ENCODE measurements at regions of chr11 and their contacts with region 1.

Region 1: DNA sequence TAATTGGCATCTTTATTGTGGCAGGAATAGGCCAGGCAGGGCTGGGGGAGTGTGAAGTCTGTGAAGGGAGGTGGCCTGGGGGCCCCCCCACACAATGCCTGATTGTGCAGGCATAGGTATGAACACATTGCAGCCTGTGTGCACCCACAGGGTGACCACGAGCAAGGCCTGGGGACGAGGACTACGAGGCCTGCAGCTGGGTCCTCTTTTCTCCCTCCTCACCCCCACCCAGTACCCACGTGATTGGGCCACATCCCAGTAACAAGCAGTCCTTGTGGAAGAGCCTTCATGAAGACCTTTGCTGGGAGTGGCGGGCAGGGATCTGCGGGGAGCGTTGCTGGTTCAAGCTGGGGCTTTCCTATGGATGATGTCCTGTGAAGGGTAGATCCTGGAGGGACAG is 29.3 kb downstream of the ZBTB16 start:
- DNase-seq: no peak
- H3K4me3 Mint-ChIP-seq: no peak overlapping the region
- H3K27ac Mint-ChIP-seq: no peak overlapping the region
- H3K4me1 Mint-ChIP-seq: peaks cover 24% of the 10 kb centered on the region
- H3K27me3 Mint-ChIP-seq: peaks cover 12% of the 10 kb centered on the region

Region 2: DNA sequence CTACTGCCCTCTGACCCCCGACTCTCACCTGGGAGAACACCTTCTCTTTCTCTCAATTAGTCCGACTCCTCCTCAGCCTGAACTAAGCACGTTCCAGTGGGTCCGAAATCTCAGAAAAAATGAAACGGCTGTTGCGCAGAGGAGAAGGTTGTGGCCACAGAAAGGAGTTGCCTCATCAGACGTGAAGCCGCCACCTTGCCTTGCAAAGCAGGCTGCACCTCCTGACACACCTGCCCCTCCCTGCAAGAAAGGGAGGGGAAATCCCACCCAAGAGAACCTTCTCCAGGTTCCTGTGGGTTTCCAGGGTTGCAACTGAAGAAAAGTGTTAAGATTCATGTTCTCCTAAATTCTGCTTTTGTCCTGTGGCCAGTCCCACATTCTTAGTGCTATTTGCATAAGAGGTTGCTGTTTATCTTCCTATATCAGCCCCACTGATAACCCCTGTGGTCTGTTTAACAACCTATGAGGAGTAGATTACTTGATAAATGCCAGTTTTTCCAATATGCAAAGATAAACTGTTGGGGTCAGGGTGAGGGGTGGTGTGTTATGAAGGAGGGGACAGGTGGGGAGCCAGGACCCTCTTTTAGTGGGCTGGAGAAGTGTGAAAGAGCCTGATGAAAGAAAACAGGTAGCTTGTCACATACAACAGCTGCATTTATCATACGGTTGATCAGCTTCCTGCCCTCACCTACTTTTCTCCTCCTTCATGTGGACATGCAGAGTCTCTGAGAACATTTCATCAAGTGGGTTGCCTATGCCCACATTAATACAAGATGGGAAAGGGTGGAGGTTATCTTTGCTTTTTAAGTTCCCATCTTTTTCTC is 11.1 kb before region 1 on chr11:
- intact Hi-C with region 1: loop called (anchors 1 kb)
- DNase-seq: no peak
- H3K4me3 Mint-ChIP-seq: peak overlapping the region; percentile 46
- H3K27ac Mint-ChIP-seq: no peak overlapping the region
- H3K4me1 Mint-ChIP-seq: peaks cover 49% of the 10 kb centered on the region
- H3K27me3 Mint-ChIP-seq: peaks cover 9% of the 10 kb centered on the region

Region 3: DNA sequence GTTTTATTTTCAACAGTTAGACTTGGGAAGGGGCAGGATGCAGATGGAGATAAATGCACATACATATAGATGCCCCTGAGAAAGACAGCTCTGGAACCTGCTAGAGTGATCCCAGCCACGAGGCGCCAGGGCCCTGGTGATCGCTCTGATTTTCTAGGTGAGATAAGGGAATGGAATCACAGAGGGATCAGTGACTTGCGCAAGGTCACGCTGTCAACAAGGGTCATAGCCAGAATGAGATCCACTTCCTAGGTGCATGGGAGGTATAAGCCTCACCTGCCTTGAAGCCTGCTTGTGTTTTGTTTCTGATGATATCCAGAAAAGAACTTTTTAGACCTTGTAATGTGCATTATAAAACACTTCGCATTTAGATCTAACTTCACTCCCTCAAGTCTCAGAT is 18.1 kb after region 1 on chr11:
- intact Hi-C with region 1: loop called (anchors 2 kb)
- DNase-seq: no peak
- H3K4me3 Mint-ChIP-seq: no peak overlapping the region
- H3K27ac Mint-ChIP-seq: no peak overlapping the region
- H3K4me1 Mint-ChIP-seq: peaks cover 26% of the 10 kb centered on the region
- H3K27me3 Mint-ChIP-seq: peaks cover 28% of the 10 kb centered on the region

Region 4: GRCh38 chr11:115869780-115870431 is 1781.1 kb after region 1 on chr11:
- intact Hi-C with region 1: no loop called
- DNase-seq: no peak
- H3K4me3 Mint-ChIP-seq: no peak overlapping the region
- H3K27ac Mint-ChIP-seq: no peak overlapping the region
- H3K4me1 Mint-ChIP-seq: peaks cover 5% of the 10 kb centered on the region
- H3K27me3 Mint-ChIP-seq: peaks cover 7% of the 10 kb centered on the region